ENCODE measurements at regions of chr3 and their contacts with region 1.

Region 1: DNA sequence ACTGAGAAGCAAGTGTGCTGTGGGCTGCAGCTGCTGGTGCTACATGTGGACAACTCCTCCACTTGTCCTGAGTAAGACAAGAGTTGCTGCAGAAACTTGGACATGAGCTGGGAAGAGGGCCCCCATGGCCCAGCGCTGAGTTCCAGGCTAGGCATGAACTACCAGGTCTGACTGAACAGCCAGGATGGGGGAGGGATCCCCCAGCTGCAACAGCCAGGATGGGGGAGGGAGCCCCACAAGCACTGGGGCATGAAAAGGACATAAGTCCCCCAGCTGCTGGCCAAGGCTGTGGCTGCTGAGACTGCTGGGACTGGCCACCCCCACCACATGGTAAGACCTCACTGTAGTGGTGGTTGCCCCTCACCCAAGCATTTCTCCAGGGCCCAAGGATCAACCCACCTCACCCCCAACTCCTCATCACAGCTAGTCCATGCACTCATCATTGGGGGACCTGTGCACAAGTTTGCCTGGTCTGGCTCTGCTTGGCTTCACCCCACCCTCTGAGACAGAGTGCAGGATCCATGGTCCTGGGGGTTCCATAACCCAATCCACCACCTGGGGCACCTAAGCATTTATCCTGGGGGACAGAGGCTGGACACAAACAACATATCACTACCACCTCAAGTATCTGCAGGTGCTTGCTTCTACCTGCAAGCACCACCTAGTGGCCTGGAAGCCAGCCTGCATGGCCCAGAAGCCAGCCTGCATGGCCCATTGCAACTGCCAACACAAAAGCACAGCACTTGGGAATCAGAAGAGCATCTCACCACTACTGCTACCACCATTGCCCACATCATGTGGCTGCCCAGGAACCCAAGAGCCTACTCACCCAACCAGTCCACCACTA is 84.5 kb upstream of the STT3B start:
- DNase-seq: peak; percentile 27
- H3K4me3 ChIP-seq: no peak overlapping the region
- H3K27ac ChIP-seq: no peak overlapping the region
- H3K4me1 ChIP-seq: no peaks in the 10 kb centered on the region
- H3K27me3 ChIP-seq: peaks cover 3% of the 10 kb centered on the region
- CTCF ChIP-seq: peak; percentile 92 to 95

Region 2: DNA sequence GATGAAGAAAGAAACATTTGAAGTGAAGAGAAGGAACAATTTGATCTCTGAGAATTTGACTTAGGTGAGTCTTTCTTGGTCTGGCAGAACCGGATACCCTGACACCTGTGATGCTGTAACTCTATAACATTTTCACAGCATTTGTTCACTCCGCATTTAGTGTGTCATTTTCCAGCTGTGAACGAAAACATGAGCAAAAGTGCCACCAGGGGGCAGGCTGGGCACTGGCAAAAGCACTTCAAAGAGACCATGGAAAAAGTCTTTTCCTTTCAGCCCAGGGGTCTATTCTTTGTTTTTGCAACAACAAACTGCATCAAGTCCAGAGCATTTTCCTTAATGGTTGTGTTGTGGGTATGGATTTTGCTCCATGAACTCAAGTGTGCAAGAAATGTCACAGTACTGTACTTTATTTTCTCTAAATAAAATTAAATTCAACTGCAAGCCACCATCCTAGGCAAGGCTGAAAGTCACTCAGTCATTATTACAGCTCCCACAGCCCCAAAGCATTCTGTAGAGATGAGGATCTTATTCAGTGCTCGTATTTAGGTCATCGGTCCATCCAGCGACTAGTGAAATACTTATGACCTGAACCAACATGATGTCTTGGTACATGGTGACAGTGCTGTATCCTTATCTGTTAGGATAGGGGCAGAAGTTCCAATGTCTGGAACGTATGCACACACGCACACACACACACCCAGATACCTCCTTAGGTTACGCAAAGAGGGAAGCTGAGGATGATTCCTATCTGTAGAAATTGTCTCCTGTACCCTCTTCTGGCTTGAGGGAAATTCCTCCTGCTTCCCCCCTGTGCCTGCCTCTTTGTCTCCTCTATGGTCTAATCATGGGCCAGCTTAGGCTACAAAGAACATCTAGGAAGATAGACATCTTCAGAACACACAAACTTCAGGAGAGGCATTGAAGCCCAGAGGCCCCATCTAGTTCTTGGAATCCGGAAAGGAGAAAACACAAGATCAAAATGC is 679.3 kb before region 1 on chr3:
- CTCF ChIA-PET with region 1: no interaction called
- dilution Hi-C with region 1: no loop called
- in situ Hi-C with region 1: no loop called
- intact Hi-C with region 1: loop called (anchors 2 kb)
- DNase-seq: peak; percentile 32
- H3K4me3 ChIP-seq: no peak overlapping the region
- H3K27ac ChIP-seq: no peak overlapping the region
- H3K4me1 ChIP-seq: peaks cover 15% of the 10 kb centered on the region
- H3K27me3 ChIP-seq: no peaks in the 10 kb centered on the region
- CTCF ChIP-seq: peak; percentile 83 to 95

Region 3: DNA sequence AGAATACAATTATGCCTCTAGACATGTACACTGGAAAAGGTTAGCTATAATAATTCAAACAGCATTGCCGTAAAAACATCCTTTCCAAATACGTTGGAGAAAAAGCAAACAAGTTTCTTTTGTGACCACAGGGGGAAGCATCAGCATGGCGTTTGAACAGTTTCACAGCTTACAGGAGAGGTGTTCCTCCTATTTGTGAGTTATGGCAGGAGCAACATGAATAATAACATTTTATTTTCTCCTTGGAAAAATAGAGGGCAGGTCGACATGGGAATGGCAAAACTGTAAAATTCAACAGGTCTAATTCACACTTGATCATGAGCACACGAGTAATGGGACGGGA is 514.1 kb before region 1 on chr3:
- CTCF ChIA-PET with region 1: no interaction called
- dilution Hi-C with region 1: no loop called
- in situ Hi-C with region 1: no loop called
- intact Hi-C with region 1: loop called (anchors 5 kb)
- DNase-seq: peak; percentile 27
- H3K4me3 ChIP-seq: no peak overlapping the region
- H3K27ac ChIP-seq: no peak overlapping the region
- H3K4me1 ChIP-seq: no peaks in the 10 kb centered on the region
- H3K27me3 ChIP-seq: no peaks in the 10 kb centered on the region
- CTCF ChIP-seq: peak; percentile 69 to 70

Region 4: GRCh38 chr3:30970183-30970582 is 478.1 kb before region 1 on chr3:
- CTCF ChIA-PET with region 1: no interaction called
- dilution Hi-C with region 1: no loop called
- in situ Hi-C with region 1: no loop called
- intact Hi-C with region 1: loop called (anchors 1 kb)
- DNase-seq: peak; percentile 20
- H3K4me3 ChIP-seq: no peak overlapping the region
- H3K27ac ChIP-seq: no peak overlapping the region
- H3K4me1 ChIP-seq: peaks cover under 1% of the 10 kb centered on the region
- H3K27me3 ChIP-seq: no peaks in the 10 kb centered on the region
- CTCF ChIP-seq: peak; percentile 14 to 64

Region 5: GRCh38 chr3:31247850-31248562 is 200.3 kb before region 1 on chr3:
- CTCF ChIA-PET with region 1: no interaction called
- dilution Hi-C with region 1: no loop called
- in situ Hi-C with region 1: no loop called
- intact Hi-C with region 1: loop called (anchors 10 kb)
- DNase-seq: peak; percentile 70
- H3K4me3 ChIP-seq: no peak overlapping the region
- H3K27ac ChIP-seq: no peak overlapping the region
- H3K4me1 ChIP-seq: peaks cover 14% of the 10 kb centered on the region
- H3K27me3 ChIP-seq: no peaks in the 10 kb centered on the region
- CTCF ChIP-seq: no peak

Region 6: DNA sequence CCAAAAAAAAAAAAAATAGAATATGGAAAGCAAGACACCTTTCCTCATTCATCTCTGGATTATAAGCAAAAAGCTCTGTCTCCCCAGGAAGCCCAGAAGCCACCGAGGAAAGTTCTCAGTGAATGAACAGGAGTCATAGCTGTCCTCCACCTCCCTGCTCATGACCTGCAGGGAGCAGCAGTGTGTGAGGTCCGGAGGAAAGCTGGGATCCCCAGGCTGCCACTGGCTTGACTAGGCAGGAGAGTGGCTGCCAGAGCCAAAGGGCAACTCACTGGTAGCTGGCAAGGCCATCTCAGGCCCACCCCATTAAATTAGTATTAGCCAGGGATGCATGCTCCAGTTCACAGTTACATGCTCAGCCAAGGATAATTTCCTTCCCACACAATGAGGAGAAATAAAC is 107.1 kb before region 1 on chr3:
- CTCF ChIA-PET with region 1: no interaction called
- dilution Hi-C with region 1: no loop called
- in situ Hi-C with region 1: no loop called
- intact Hi-C with region 1: loop called (anchors 1 kb)
- DNase-seq: no peak
- H3K4me3 ChIP-seq: no peak overlapping the region
- H3K27ac ChIP-seq: no peak overlapping the region
- H3K4me1 ChIP-seq: no peaks in the 10 kb centered on the region
- H3K27me3 ChIP-seq: no peaks in the 10 kb centered on the region
- CTCF ChIP-seq: peak in 1 of 2 donors; percentile 22

Region 7: DNA sequence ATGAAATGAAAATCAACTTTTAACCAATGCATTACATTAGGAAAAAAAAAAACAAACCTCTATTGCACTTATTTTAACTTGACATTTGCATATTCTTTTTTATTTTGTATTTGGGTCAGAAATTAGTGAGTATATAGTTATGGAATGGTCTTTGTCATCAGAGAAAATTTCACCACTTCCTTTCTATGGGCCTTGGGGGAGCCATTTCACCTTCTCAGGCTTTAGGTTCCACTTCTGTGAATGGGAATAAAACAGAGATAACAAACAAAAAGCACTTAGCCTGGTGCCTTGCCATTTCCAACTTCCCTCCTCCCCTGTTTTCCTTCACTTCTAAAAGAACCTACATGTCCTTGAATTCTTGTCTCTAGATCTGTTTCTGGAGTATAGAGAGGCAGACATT is 83.5 kb before region 1 on chr3:
- CTCF ChIA-PET with region 1: no interaction called
- dilution Hi-C with region 1: no loop called
- in situ Hi-C with region 1: no loop called
- intact Hi-C with region 1: loop called (anchors 1 kb)
- DNase-seq: peak; percentile 40
- H3K4me3 ChIP-seq: no peak overlapping the region
- H3K27ac ChIP-seq: no peak overlapping the region
- H3K4me1 ChIP-seq: peaks cover 13% of the 10 kb centered on the region
- H3K27me3 ChIP-seq: no peaks in the 10 kb centered on the region
- CTCF ChIP-seq: peak in 1 of 2 donors; percentile 28

Measured in mammary epithelial cell (primary cell).